ENCODE measurements at regions of chr1 and their contacts with region 1.

Region 1: GRCh38 chr1:66464802-66465201 is 69.2 kb upstream of the SGIP1 start:
- DNase-seq: no peak
- ATAC-seq: no peak
- H3K4me3 ChIP-seq: no peak overlapping the region
- H3K27ac ChIP-seq: no peak overlapping the region
- H3K4me1 ChIP-seq: no peaks in the 10 kb centered on the region
- H3K27me3 ChIP-seq: peaks cover 0 to 3% of the 10 kb centered on the region in 2 experiments; a peak in 1 of 4 replicates
- CTCF ChIP-seq: no peak
- EP300 ChIP-seq: no peak
- POLR2A ChIP-seq: no peak
- RAD21 ChIP-seq: no peak

Region 2: DNA sequence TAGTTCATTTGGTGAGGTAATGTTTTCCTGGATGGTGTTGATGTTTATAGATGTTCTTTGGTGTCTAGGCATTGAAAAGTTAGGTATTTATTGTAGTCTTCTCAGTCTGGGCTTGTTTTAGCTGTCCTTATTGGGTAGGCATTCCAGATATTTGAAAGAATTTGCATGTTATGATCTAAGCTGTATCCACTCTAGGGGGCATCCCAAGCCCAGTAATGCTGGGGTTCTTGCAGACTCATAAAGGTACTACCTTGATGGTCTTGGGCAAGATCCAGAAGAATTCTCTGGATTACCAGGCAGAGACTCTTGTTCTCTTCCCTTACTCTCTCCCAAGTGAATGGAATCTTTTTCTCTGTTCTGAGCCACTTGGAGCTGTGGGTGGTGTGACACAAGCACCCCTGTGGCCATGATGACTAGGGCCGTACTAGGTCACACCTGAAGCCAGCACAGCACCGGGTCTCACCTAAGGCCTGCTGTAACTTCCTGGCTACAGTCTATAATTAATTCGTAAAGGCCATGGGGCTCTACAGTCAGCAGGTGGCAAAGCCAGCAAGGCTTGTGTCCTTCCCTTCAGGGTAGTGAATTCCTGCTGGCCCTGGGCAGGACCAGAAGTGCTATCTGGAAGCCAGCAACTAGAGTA is 746.9 kb before region 1 on chr1:
- CTCF ChIA-PET with region 1: no interaction called
- POLR2A ChIA-PET with region 1: no interaction called
- RAD21 ChIA-PET with region 1: no interaction called
- SMC1A ChIA-PET with region 1: no interaction called
- in situ Hi-C with region 1: loop called (anchors 25 kb)
- intact Hi-C with region 1: no loop called
- DNase-seq: no peak
- ATAC-seq: 0 out of 3 replicates have a peak, but pooled peaks have one; percentile 23
- H3K4me3 ChIP-seq: no peak overlapping the region
- H3K27ac ChIP-seq: no peak overlapping the region
- H3K4me1 ChIP-seq: no peaks in the 10 kb centered on the region
- H3K27me3 ChIP-seq: no peaks in the 10 kb centered on the region
- CTCF ChIP-seq: peak in 1 of 3 experiments; percentile 20; a peak in 1 of 6 replicates
- EP300 ChIP-seq: no peak
- POLR2A ChIP-seq: no peak
- RAD21 ChIP-seq: peak; percentile 49

Region 3: DNA sequence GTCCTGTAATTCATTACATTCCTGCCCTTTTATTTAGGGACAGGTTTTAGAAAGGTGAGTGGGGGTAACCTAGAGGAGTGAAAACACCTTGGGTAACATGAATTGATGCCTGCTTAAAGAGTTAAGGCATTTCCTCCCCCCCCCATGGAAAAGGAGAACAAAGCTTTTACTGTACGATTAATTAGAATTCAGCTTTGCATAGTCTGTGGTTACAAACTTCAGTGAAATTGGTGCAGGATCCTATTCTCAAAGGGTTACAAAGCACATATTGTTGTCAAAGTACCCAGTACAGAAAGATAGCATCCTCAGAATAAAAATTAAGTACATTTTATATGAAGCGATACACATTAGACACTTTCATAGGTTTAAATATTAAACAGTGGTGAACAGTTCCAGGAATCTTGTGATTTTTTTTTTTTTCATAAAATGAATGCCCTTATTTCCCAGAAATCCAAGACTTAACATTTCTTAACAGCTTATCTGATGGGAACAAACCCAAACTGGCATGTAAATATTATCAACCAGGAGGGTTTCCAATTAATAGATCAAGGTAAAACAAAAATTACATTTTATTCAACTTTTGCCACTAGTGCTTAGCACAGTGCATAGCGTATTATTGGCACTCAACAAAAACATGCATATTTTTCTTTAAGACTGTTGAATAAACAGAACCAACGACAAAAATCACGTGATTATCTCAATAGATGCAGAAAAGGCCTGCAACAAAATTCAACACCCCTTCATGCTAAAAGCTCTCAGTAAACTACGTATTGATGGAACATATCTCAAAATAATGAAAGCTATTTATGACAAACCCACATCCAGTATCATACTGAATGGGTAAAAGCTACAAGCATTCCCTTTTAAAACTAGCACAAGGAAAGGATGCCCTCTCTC is 499.4 kb before region 1 on chr1:
- CTCF ChIA-PET with region 1: no interaction called
- POLR2A ChIA-PET with region 1: no interaction called
- RAD21 ChIA-PET with region 1: no interaction called
- SMC1A ChIA-PET with region 1: no interaction called
- in situ Hi-C with region 1: no loop called
- intact Hi-C with region 1: loop called (anchors 5 kb)
- DNase-seq: no peak
- ATAC-seq: no peak
- H3K4me3 ChIP-seq: no peak overlapping the region
- H3K27ac ChIP-seq: no peak overlapping the region
- H3K4me1 ChIP-seq: no peaks in the 10 kb centered on the region
- H3K27me3 ChIP-seq: no peaks in the 10 kb centered on the region; a peak in 1 of 4 replicates
- CTCF ChIP-seq: no peak
- EP300 ChIP-seq: no peak
- POLR2A ChIP-seq: no peak
- RAD21 ChIP-seq: no peak

Region 4: DNA sequence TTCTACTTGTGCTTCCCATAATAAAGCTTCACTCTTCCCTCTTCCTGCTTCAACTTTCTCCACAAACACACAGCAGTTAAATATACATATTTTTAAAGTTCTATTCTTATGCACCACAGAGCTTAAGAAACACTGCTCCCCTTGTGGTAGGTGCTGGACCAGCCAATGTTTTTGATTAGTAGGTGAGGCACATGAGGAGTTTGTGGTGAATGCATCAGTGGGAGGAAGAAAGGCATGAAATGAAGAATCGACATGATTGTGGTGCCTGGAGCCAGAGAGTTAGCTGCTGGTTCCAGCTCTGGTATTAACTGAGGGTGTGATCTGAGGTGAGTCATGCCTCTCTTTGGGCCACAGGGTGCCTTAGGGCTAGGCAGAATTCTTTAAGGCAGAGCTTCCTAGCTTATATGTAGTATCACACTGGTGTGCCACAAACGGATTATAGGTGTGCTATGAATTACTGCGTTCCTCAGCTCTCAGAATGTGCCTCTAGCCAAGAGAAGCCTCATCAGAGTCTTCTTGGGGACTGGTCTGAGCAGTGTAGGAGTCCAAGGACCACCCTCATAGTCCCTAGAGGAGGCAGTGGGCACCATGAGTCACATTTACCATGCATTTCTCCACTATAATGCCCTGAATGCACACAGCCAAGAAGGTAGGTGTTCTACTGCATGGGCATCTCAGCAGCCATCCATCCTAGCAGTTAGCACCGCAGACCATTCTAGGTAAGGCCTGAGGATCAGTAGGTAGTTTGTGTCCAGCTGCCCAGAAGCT is 28.2 kb before region 1 on chr1:
- CTCF ChIA-PET with region 1: no interaction called
- POLR2A ChIA-PET with region 1: no interaction called
- RAD21 ChIA-PET with region 1: no interaction called
- SMC1A ChIA-PET with region 1: no interaction called
- in situ Hi-C with region 1: no loop called
- intact Hi-C with region 1: no loop called
- DNase-seq: peak; percentile 44
- ATAC-seq: peak; percentile 85
- H3K4me3 ChIP-seq: no peak overlapping the region
- H3K27ac ChIP-seq: peak overlapping the region; percentile 7; the same call in 1 of the 2 replicates
- H3K4me1 ChIP-seq: peaks cover 31% of the 10 kb centered on the region
- H3K27me3 ChIP-seq: no peaks in the 10 kb centered on the region
- CTCF ChIP-seq: peak; percentile 27 to 56 (median 50); a peak in 5 of 6 replicates
- EP300 ChIP-seq: no peak
- POLR2A ChIP-seq: no peak
- RAD21 ChIP-seq: peak; percentile 58

Region 5: DNA sequence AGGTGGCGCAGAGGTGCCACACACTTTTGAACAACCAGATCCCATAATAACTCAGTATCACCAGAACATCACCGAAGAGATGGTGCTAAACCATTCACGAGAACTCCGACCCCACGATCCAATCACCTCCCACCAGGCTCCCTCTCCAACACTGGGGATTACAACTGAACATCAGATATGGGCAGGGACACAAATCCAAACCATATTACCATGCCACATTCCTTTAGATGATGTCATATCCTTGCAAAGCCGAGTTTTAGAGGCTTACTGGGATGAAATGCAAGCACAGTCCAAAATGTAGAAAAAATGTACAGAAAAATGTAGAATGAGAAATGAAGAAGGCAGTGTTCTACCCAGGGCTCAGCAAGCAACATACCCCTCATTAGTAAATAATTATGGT is 133.9 kb after region 1 on chr1:
- CTCF ChIA-PET with region 1: no interaction called
- POLR2A ChIA-PET with region 1: no interaction called
- RAD21 ChIA-PET with region 1: no interaction called
- SMC1A ChIA-PET with region 1: no interaction called
- in situ Hi-C with region 1: no loop called
- intact Hi-C with region 1: no loop called
- DNase-seq: no peak
- ATAC-seq: no peak
- H3K4me3 ChIP-seq: no peak overlapping the region
- H3K27ac ChIP-seq: no peak overlapping the region
- H3K4me1 ChIP-seq: no peaks in the 10 kb centered on the region
- H3K27me3 ChIP-seq: no peaks in the 10 kb centered on the region; a peak in 1 of 4 replicates
- CTCF ChIP-seq: no peak
- EP300 ChIP-seq: no peak
- POLR2A ChIP-seq: no peak
- RAD21 ChIP-seq: no peak

Measured in GM12878 (cell line).